B cell (primary cell): ENCODE measurements at regions of chr19 and their contacts with region 1.

Region 1: GRCh38 chr19:48872182-48872883 is at the start of gene PPP1R15A:
- DNase-seq: peak; percentile 99
- ATAC-seq: peak; percentile 53
- H3K4me3 ChIP-seq: peak within 1 kb of the TSS; percentile 70 to 100 (median 95)
- H3K4me3 Mint-ChIP-seq: peak within 1 kb of the TSS; percentile 98
- H3K27ac ChIP-seq: peak within 1 kb of the TSS; percentile 96 to 100
- H3K27ac Mint-ChIP-seq: peak within 1 kb of the TSS; percentile 100
- H3K4me1 ChIP-seq: peaks cover 30 to 48% of the 10 kb centered on the region in 2 donors
- H3K4me1 Mint-ChIP-seq: peaks cover 40% of the 10 kb centered on the region
- H3K27me3 ChIP-seq: peaks cover 0 to 2% (median 0%) of the 10 kb centered on the region in 4 experiments
- H3K27me3 Mint-ChIP-seq: peaks cover 5% of the 10 kb centered on the region
- CTCF ChIP-seq: no peak
- total RNA-seq, gene PPP1R15A: 122 and 128 TPM in 2 replicates

Region 2: DNA sequence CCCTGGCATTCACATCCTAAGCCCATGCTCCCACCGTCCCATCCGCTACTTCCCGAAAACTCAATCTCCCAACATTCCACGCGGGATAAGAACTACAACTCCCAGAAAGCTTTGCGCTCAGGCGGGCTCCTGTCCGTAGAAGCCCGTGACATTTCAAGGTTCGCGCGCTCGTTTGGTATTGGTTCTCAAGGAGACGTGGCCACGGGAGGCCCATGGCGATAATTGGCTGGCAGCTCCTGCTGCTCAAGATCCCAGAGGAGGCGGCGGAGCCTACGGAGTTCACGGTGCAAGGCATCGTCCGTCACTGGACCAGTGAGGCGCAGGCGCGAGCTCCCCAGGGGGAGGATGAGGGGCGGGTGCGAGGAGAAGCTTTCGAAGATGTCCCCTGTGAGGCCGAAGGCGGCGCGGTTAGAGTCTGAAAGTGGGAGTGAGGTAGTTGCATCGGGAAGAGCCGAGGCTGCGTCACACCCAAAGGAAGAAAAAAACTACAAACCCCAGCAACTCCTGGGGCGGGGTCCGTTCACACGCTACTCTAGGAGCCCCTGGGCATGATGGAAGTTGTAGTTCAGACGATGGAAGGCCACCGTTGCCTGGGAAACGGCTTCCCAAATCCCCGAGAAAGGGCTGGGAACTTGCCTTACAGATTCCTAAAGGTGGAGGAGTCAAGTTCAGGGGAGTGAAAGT is 151.6 kb before region 1 on chr19:
- CTCF ChIA-PET with region 1: no interaction called
- POLR2A ChIA-PET with region 1: interaction called, 3 read pairs
- intact Hi-C with region 1: loop called (anchors 1 kb)
- DNase-seq: peak; percentile 93
- ATAC-seq: peak; percentile 86
- H3K4me3 ChIP-seq: peak overlapping the region; percentile 47 to 91 (median 75)
- H3K4me3 Mint-ChIP-seq: peak overlapping the region; percentile 98
- H3K27ac ChIP-seq: peak overlapping the region; percentile 92 to 93
- H3K27ac Mint-ChIP-seq: peak overlapping the region; percentile 98
- H3K4me1 ChIP-seq: peaks cover 10 to 25% of the 10 kb centered on the region in 2 donors
- H3K4me1 Mint-ChIP-seq: peaks cover 21% of the 10 kb centered on the region
- H3K27me3 ChIP-seq: no peaks in the 10 kb centered on the region
- H3K27me3 Mint-ChIP-seq: no peaks in the 10 kb centered on the region
- CTCF ChIP-seq: no peak

Region 3: GRCh38 chr19:48812094-48812929 is 60.0 kb before region 1 on chr19:
- CTCF ChIA-PET with region 1: no interaction called
- POLR2A ChIA-PET with region 1: interaction called, 4 read pairs
- intact Hi-C with region 1: loop called (anchors 2 kb)
- DNase-seq: peak; percentile 81
- ATAC-seq: peak; percentile 83
- H3K4me3 ChIP-seq: peak overlapping the region in 4 of 5 experiments; percentile 62 to 88 (median 74)
- H3K4me3 Mint-ChIP-seq: peak overlapping the region; percentile 93
- H3K27ac ChIP-seq: peak overlapping the region; percentile 16 to 22
- H3K27ac Mint-ChIP-seq: peak overlapping the region; percentile 97
- H3K4me1 ChIP-seq: peaks cover 7 to 26% of the 10 kb centered on the region in 2 donors
- H3K4me1 Mint-ChIP-seq: peaks cover 34% of the 10 kb centered on the region
- H3K27me3 ChIP-seq: no peaks in the 10 kb centered on the region
- H3K27me3 Mint-ChIP-seq: no peaks in the 10 kb centered on the region
- CTCF ChIP-seq: no peak

Region 4: GRCh38 chr19:48858984-48859710 is 13.2 kb before region 1 on chr19:
- CTCF ChIA-PET with region 1: interaction called, 4 read pairs
- POLR2A ChIA-PET with region 1: interaction called, 6 read pairs
- intact Hi-C with region 1: loop called (anchors 1 kb)
- DNase-seq: peak; percentile 77
- ATAC-seq: peak; percentile 80
- H3K4me3 ChIP-seq: peak overlapping the region; percentile 19 to 63 (median 54)
- H3K4me3 Mint-ChIP-seq: peak overlapping the region; percentile 98
- H3K27ac ChIP-seq: peak overlapping the region; percentile 46 to 59
- H3K27ac Mint-ChIP-seq: peak overlapping the region; percentile 90
- H3K4me1 ChIP-seq: peaks cover 5 to 14% of the 10 kb centered on the region in 2 donors
- H3K4me1 Mint-ChIP-seq: peaks cover 10% of the 10 kb centered on the region
- H3K27me3 ChIP-seq: no peaks in the 10 kb centered on the region
- H3K27me3 Mint-ChIP-seq: no peaks in the 10 kb centered on the region
- CTCF ChIP-seq: no peak

Region 5: DNA sequence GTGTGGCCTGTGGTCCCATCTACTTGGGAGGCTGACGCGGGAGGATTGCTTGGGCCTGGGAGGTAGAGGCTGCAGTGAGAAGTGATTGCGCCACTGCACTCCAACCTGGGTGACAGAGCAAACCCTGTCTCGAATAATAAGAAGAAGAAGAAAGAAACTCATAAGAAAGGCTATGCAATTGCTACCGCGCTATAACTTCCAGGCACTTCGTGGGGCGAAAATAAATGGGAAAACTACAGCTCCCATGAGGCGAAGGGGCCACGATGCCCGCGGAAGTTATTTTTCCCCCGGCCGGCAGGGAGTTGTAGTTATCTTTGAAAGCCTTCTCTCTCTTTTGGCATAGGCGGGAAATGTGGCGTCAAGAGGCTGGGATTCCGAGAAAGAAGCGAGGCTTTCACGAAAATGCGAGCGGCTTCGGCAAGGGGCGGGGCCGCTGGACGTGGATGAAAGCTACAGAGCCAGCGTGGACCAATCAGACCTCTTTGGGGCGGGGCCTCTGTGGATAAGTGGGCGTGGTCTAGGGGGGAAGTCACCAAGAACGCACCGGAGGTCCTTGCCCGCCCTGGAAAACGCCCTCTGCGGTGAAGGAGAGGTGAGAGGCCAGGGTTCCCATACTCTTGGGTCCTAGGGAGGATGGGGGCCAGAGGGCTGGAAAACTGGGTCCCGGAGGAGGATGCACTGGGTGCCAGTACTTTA is 27.6 kb after region 1 on chr19 and contains the start of gene NUCB1:
- CTCF ChIA-PET with region 1: no interaction called
- POLR2A ChIA-PET with region 1: interaction called, 7 read pairs
- intact Hi-C with region 1: loop called (anchors 1 kb)
- DNase-seq: peak; percentile 96
- ATAC-seq: peak; percentile 99
- H3K4me3 ChIP-seq: peak within 1 kb of the TSS; percentile 62 to 95 (median 82)
- H3K4me3 Mint-ChIP-seq: peak within 1 kb of the TSS; percentile 96
- H3K27ac ChIP-seq: peak within 1 kb of the TSS; percentile 61 to 83
- H3K27ac Mint-ChIP-seq: peak within 1 kb of the TSS; percentile 91
- H3K4me1 ChIP-seq: peaks cover 18 to 35% of the 10 kb centered on the region in 2 donors
- H3K4me1 Mint-ChIP-seq: peaks cover 31% of the 10 kb centered on the region
- H3K27me3 ChIP-seq: peaks cover 0 to 25% (median 6%) of the 10 kb centered on the region in 4 experiments
- H3K27me3 Mint-ChIP-seq: peaks cover 11% of the 10 kb centered on the region
- CTCF ChIP-seq: no peak
- total RNA-seq, gene NUCB1: 134 and 136 TPM in 2 replicates

Region 6: DNA sequence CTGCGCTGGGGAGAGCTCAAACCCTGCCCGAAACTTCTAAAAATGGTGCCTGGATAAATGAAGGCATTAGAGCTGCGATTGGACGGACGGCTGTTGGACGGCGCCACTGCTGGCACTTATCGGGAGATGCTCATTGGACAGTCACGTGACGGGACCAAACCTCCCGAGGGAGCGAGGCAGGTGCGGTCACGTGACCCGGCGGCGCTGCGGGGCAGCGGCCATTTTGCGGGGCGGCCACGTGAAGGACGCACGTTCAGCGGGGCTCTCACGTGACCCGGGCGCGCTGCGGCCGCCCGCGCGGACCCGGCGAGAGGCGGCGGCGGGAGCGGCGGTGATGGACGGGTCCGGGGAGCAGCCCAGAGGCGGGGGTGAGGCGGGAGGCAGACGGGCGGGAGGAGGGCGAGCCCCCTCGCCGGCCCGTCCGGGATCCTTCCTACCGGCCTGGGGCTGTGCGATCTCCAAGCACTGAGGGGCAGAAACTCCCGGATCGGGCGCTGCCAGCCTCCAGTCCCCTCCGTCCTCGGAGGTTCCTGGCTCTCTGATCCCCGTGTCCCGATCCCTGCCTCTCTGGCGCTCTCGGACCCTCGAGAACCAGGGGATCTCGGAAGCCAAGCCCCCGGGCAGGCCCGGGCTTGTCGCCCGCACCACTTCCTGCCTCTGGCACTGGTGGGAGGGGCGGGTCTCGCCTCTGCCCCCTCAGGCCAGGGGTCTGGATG is 82.4 kb after region 1 on chr19 and contains the start of gene BAX:
- CTCF ChIA-PET with region 1: no interaction called
- POLR2A ChIA-PET with region 1: interaction called, 4 read pairs
- intact Hi-C with region 1: loop called (anchors 1 kb)
- DNase-seq: peak; percentile 92
- ATAC-seq: peak; percentile 88
- H3K4me3 ChIP-seq: peak within 1 kb of the TSS; percentile 47 to 99 (median 87)
- H3K4me3 Mint-ChIP-seq: peak within 1 kb of the TSS; percentile 85
- H3K27ac ChIP-seq: peak within 1 kb of the TSS; percentile 84 to 89
- H3K27ac Mint-ChIP-seq: peak within 1 kb of the TSS; percentile 92
- H3K4me1 ChIP-seq: peaks cover 6 to 16% of the 10 kb centered on the region in 2 donors
- H3K4me1 Mint-ChIP-seq: peaks cover 20% of the 10 kb centered on the region
- H3K27me3 ChIP-seq: no peaks in the 10 kb centered on the region
- H3K27me3 Mint-ChIP-seq: no peaks in the 10 kb centered on the region
- CTCF ChIP-seq: no peak
- total RNA-seq, gene BAX: 92.7 and 95.3 TPM in 2 replicates

Region 7: DNA sequence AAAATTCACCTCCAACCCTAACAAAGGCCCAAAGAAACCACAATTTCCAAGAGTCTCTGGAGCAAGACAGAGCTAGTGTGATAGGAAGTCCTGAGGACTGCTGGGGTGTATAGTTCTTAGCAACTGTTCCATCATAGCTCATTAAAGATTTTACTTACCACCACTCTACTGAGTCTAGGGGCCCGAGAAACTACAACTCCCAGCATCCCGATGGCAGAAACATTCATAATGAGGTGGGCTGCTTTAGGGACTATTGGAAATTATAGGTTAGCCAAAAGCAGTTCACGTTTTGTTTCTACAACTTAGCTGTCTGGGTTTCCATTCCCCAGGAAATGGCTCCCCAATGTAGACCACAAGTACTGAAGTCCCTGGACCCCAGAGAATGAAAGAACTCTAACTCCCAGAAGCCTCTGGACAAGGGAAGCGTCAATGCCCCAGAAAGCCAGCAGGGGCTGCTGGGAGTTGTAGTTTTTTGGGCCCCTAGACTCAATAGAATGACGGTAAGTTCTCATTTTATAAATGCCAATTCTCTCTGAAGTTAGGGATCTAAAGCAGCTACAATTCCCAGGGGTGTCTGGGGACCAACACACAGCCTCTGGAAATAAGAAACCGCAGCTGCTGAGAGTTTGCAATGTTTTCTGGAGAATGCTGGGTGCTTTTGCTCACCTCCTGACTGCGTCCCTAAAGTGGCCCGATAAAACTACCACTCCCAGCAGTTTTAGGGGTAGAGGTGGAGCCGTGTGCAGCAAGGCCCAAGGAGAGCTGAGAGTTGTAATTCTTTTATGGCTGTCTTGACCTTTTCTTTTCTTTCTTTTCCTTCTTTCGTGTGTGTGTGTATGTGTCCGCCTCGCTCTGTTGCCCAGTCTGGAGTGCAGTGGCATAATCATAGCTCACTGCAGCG is 103.9 kb after region 1 on chr19:
- CTCF ChIA-PET with region 1: interaction called, 30 read pairs
- POLR2A ChIA-PET with region 1: interaction called, 15 read pairs
- intact Hi-C with region 1: no loop called
- DNase-seq: peak; percentile 62
- ATAC-seq: peak; percentile 66
- H3K4me3 ChIP-seq: no peak overlapping the region
- H3K4me3 Mint-ChIP-seq: no peak overlapping the region
- H3K27ac ChIP-seq: no peak overlapping the region
- H3K27ac Mint-ChIP-seq: peak overlapping the region; percentile 32
- H3K4me1 ChIP-seq: peaks cover 0 to under 1% of the 10 kb centered on the region in 2 donors
- H3K4me1 Mint-ChIP-seq: peaks cover 4% of the 10 kb centered on the region
- H3K27me3 ChIP-seq: no peaks in the 10 kb centered on the region
- H3K27me3 Mint-ChIP-seq: no peaks in the 10 kb centered on the region
- CTCF ChIP-seq: no peak